ENCODE measurements at regions of chr3 and their contacts with region 1.

Region 1: GRCh38 chr3:45182915-45183867 is 37.0 kb upstream of the CDCP1 start:
- DNase-seq: peak; percentile 54
- ATAC-seq: peak; percentile 57
- H3K4me3 ChIP-seq: no peak overlapping the region
- H3K27ac ChIP-seq: peak overlapping the region; percentile 54
- H3K4me1 ChIP-seq: peaks cover 21% of the 10 kb centered on the region
- H3K27me3 ChIP-seq: no peaks in the 10 kb centered on the region
- CTCF ChIP-seq: no peak
- POLR2A ChIP-seq: no peak
- RAD21 ChIP-seq: no peak

Region 2: DNA sequence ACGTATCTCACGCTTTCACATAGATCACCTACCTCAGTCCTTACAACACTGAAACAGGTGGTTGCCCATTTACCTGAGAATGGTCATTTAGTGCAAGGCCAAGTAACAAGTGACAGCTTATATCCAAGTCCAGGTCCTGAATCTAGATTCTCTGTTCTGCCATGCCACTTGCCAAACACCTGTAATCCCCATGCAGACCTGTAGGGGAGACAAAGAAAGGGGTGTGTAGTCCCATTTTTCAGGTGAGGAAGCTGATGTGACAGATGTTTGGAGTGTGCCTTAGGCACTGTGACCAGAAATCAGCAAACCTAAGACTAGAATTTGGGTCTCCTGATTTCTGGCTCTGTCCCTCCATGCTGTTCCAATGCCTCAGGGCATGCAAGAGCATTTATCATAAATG is 522.0 kb before region 1 on chr3:
- CTCF ChIA-PET with region 1: no interaction called
- POLR2A ChIA-PET with region 1: no interaction called
- dilution Hi-C with region 1: no loop called
- in situ Hi-C with region 1: no loop called
- intact Hi-C with region 1: no loop called
- DNase-seq: no peak
- ATAC-seq: no peak
- H3K4me3 ChIP-seq: no peak overlapping the region
- H3K27ac ChIP-seq: no peak overlapping the region
- H3K4me1 ChIP-seq: no peaks in the 10 kb centered on the region
- H3K27me3 ChIP-seq: no peaks in the 10 kb centered on the region
- CTCF ChIP-seq: no peak
- POLR2A ChIP-seq: no peak
- RAD21 ChIP-seq: no peak

Region 3: GRCh38 chr3:45062697-45063070 is 120.5 kb before region 1 on chr3:
- CTCF ChIA-PET with region 1: no interaction called
- POLR2A ChIA-PET with region 1: interaction called, 17 read pairs
- dilution Hi-C with region 1: no loop called
- in situ Hi-C with region 1: no loop called
- intact Hi-C with region 1: no loop called
- DNase-seq: no peak
- ATAC-seq: no peak
- H3K4me3 ChIP-seq: no peak overlapping the region
- H3K27ac ChIP-seq: peak overlapping the region; percentile 92
- H3K4me1 ChIP-seq: peaks cover 32% of the 10 kb centered on the region
- H3K27me3 ChIP-seq: no peaks in the 10 kb centered on the region
- CTCF ChIP-seq: no peak
- POLR2A ChIP-seq: no peak
- RAD21 ChIP-seq: no peak

Measured in IMR-90 (cell line).